Activated T-helper 2 cell treated with anti-CD3 and anti-CD28 coated beads, Interferon-gamma antibody, Interleukin-2, Interleukin-4, amounts not matched to agents 10 μg/mL and 5 μg/mL and 100 μg/mL, durations not matched to agents 14 hours and 24 hours and 36 hours (primary cell): ENCODE measurements at regions of chr7 and their contacts with region 1.

Region 1: DNA sequence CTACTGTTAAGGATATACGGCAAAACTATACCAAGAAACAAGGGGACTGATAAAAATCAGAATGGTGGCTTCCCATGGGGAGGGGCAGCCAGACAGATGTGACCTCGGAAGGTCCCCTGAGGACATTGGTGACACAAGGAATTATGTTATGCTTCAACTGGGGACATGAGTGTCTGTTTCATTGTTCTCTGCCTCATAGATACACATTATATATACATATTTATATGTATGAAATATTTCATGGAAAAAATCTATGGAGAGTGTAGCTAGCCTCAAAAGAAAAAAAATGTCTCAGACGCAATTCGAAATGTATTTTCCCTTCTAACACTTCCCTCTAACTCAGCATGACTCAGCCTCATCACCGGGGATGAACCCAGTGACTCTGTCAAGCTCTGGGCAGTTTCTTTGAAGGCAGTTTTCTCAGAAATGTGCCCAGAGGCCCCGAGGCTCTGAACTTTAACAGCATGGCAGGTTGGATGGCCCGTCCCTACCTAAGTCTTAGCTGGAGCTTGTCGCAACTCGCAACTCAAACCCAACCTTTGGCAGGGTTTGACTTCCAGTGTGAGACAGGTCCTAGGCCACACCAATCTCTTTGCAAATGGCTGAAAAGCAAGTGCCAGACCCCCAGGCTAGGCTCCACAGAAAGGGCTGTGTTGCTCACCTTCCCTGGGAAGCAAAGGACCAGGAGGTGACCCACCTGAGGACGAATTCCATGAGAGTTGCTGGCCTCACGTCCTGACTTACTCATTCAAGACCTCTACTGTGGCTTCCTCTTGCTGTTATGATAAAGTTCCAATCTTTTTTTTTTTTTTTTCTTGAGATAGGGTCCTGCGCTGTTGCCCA is 86.9 kb downstream of the CARD11 start:
- DNase-seq: no peak
- H3K4me3 Mint-ChIP-seq: peak overlapping the region; percentile 15
- H3K27ac Mint-ChIP-seq: peak overlapping the region; percentile 89
- H3K4me1 Mint-ChIP-seq: peaks cover 54% of the 10 kb centered on the region
- H3K27me3 Mint-ChIP-seq: no peaks in the 10 kb centered on the region

Region 2: GRCh38 chr7:2978403-2978802 is 21.7 kb after region 1 on chr7:
- intact Hi-C with region 1: loop called (anchors 2 kb)
- DNase-seq: peak; percentile 59
- H3K4me3 Mint-ChIP-seq: peak overlapping the region; percentile 51
- H3K27ac Mint-ChIP-seq: peak overlapping the region; percentile 58
- H3K4me1 Mint-ChIP-seq: peaks cover 44% of the 10 kb centered on the region
- H3K27me3 Mint-ChIP-seq: no peaks in the 10 kb centered on the region

Region 3: GRCh38 chr7:3013975-3014792 is 57.4 kb after region 1 on chr7:
- intact Hi-C with region 1: loop called (anchors 10 kb)
- DNase-seq: no peak
- H3K4me3 Mint-ChIP-seq: no peak overlapping the region
- H3K27ac Mint-ChIP-seq: no peak overlapping the region
- H3K4me1 Mint-ChIP-seq: peaks cover 20% of the 10 kb centered on the region
- H3K27me3 Mint-ChIP-seq: no peaks in the 10 kb centered on the region

Region 4: GRCh38 chr7:3042861-3043489 is 86.2 kb after region 1 on chr7:
- intact Hi-C with region 1: loop called (anchors 10 kb)
- DNase-seq: peak; percentile 60
- H3K4me3 Mint-ChIP-seq: peak overlapping the region; percentile 87
- H3K27ac Mint-ChIP-seq: peak overlapping the region; percentile 88
- H3K4me1 Mint-ChIP-seq: peaks cover 35% of the 10 kb centered on the region
- H3K27me3 Mint-ChIP-seq: no peaks in the 10 kb centered on the region

Region 5: DNA sequence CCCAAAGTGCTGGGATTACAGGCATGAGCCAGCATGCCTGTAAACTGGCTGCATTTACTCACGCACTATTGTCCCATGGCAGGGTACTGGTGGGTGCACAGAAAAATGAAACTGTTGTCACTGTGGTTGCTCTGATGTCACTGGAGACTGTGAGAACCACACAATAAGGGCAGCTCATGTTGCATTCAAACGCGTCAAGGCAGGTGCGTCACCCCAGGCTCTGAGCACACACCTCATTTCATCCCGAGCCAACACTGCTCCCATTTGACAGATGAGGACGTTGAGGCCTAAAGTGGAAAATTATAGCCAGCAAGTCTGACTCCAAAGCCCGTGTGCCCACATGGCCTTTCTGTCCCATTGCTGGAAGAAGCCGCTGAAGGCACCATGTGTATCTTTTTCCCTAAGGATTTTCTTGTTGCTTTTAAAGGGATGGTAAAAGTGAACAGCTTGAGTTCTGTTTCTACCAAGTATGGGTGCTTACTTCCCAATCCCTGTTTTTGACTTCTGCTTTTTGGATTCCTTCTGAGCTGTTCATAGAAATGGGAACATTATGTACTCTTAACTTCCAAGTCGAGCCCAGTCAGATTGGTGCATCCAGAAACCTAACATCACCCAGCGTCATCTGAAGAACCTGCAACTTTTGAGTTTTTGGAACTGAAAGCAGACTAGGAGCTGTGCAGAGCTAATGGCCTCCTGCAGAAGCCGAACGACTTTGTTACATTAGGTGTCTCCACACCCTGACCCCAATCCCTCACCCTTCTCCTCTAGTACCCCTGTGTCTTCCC is 147.1 kb after region 1 on chr7:
- intact Hi-C with region 1: loop called (anchors 5 kb)
- DNase-seq: no peak
- H3K4me3 Mint-ChIP-seq: no peak overlapping the region
- H3K27ac Mint-ChIP-seq: no peak overlapping the region
- H3K4me1 Mint-ChIP-seq: peaks cover 58% of the 10 kb centered on the region
- H3K27me3 Mint-ChIP-seq: no peaks in the 10 kb centered on the region

Region 6: GRCh38 chr7:3154912-3155494 is 198.3 kb after region 1 on chr7:
- intact Hi-C with region 1: loop called (anchors 5 kb)
- DNase-seq: peak; percentile 48
- H3K4me3 Mint-ChIP-seq: no peak overlapping the region
- H3K27ac Mint-ChIP-seq: no peak overlapping the region
- H3K4me1 Mint-ChIP-seq: peaks cover 8% of the 10 kb centered on the region
- H3K27me3 Mint-ChIP-seq: peaks cover 11% of the 10 kb centered on the region